ENCODE measurements at regions of chr4 and their contacts with region 1.

Region 1: GRCh38 chr4:147731580-147732517 is at the start of gene ARHGAP10:
- DNase-seq: peak; percentile 85
- H3K4me3 Mint-ChIP-seq: peak within 1 kb of the TSS; percentile 86
- H3K27ac Mint-ChIP-seq: peak within 1 kb of the TSS; percentile 50
- H3K4me1 Mint-ChIP-seq: peaks cover 40% of the 10 kb centered on the region
- H3K27me3 Mint-ChIP-seq: no peaks in the 10 kb centered on the region
- CTCF ChIP-seq: no peak
- total RNA-seq, gene ARHGAP10: 22.4 and 24.6 TPM in 2 replicates

Region 2: GRCh38 chr4:147440442-147440841 is 291.4 kb before region 1 on chr4:
- CTCF ChIA-PET with region 1: no interaction called
- POLR2A ChIA-PET with region 1: no interaction called
- intact Hi-C with region 1: no loop called
- DNase-seq: no peak
- H3K4me3 Mint-ChIP-seq: no peak overlapping the region
- H3K27ac Mint-ChIP-seq: no peak overlapping the region
- H3K4me1 Mint-ChIP-seq: no peaks in the 10 kb centered on the region
- H3K27me3 Mint-ChIP-seq: no peaks in the 10 kb centered on the region
- CTCF ChIP-seq: no peak

Region 3: DNA sequence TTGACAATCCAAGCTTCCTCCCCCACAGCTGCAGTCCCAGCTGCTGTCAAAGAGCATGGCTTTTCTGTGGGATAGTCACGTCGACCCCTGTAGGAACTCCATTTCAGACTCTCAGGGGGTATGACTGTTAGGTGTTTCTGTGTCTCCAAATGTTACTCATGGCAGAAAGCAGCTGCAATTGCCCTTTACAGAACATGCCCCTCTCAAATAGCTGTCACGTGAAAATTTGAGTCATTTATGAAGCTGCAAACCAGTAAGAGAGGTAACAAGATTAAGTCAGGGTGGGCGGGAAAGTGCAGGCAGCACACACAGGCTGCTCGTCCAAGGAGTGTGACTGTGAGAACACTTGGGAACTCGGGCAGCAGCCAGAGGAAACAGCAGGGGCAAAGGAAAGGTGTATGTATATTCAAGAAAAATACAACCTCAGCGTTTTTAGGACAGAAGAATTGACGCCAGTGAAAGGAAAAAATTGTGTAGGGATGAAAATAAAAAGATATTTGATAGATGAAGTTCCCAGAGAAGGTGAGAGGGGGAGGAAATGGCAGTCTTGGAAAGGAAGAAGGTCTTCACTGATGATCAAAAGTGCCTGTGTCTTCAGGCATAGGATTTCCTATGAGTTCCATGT is 181.1 kb before region 1 on chr4:
- CTCF ChIA-PET with region 1: no interaction called
- POLR2A ChIA-PET with region 1: no interaction called
- intact Hi-C with region 1: no loop called
- DNase-seq: peak; percentile 54
- H3K4me3 Mint-ChIP-seq: peak overlapping the region; percentile 3
- H3K27ac Mint-ChIP-seq: peak overlapping the region; percentile 4
- H3K4me1 Mint-ChIP-seq: peaks cover 37% of the 10 kb centered on the region
- H3K27me3 Mint-ChIP-seq: no peaks in the 10 kb centered on the region
- CTCF ChIP-seq: no peak

Region 4: DNA sequence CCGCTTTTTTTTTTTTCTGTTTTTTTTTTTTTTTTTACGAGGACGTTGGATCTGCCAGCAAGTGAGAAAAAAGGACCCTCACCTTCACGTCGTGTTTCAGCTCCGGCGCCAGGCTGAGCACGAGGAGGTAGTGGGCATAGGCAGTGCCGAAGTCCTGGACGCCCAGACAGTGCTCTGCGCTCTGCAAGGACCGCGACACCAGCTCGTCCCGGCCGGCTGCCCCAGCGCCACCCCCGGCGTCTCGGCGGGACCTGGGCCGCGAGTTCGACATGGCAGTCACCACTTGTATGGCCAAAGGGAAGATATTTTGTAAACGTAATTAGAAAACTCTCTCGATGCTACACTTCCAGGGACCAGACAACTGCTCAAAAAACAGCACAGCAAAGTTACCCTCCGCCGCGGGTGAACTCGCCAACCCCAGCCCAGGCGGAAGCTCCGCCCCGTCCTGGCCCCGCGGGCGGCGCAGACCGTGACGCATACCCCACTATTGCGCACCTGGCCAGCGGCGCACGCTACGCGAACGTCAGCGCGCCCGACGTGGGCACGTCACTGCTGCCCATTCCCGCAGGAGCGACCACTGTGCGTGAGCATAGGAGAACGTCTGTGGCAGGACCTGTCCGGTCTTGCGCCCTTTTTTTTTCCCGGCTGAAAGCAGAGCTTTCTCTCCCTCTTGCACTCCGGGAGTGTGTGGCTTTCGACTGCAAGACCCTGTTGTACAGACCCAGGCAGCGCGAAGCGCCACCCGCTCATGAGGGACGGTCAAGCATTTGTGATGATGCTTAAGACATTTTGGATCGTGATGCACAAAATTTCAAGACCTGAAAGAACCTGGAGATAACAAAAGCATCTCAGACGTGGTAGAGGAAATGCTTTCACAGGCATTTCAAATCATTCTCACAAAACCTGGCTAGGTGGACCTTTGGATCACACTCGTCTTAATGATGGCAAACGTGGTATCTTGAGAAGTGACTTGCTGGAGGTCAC is 47.8 kb before region 1 on chr4 and contains the start of gene PRMT9:
- CTCF ChIA-PET with region 1: no interaction called
- POLR2A ChIA-PET with region 1: interaction called, 33 read pairs
- intact Hi-C with region 1: no loop called
- DNase-seq: peak; percentile 87
- H3K4me3 Mint-ChIP-seq: peak within 1 kb of the TSS; percentile 88
- H3K27ac Mint-ChIP-seq: peak within 1 kb of the TSS; percentile 89
- H3K4me1 Mint-ChIP-seq: peaks cover 11% of the 10 kb centered on the region
- H3K27me3 Mint-ChIP-seq: no peaks in the 10 kb centered on the region
- CTCF ChIP-seq: no peak
- total RNA-seq, gene PRMT9: 6.1 and 8.4 TPM in 2 replicates

Region 5: GRCh38 chr4:147714575-147715401 is 17.1 kb before region 1 on chr4:
- CTCF ChIA-PET with region 1: interaction called, 6 read pairs
- POLR2A ChIA-PET with region 1: interaction called, 21 read pairs
- intact Hi-C with region 1: loop called (anchors 2 kb)
- DNase-seq: peak; percentile 68
- H3K4me3 Mint-ChIP-seq: no peak overlapping the region
- H3K27ac Mint-ChIP-seq: no peak overlapping the region
- H3K4me1 Mint-ChIP-seq: no peaks in the 10 kb centered on the region
- H3K27me3 Mint-ChIP-seq: no peaks in the 10 kb centered on the region
- CTCF ChIP-seq: no peak

Region 6: GRCh38 chr4:147768113-147768512 is 36.3 kb after region 1 on chr4:
- CTCF ChIA-PET with region 1: interaction called, 5 read pairs
- POLR2A ChIA-PET with region 1: interaction called, 4 read pairs
- intact Hi-C with region 1: loop called (anchors 5 kb)
- DNase-seq: peak; percentile 57
- H3K4me3 Mint-ChIP-seq: no peak overlapping the region
- H3K27ac Mint-ChIP-seq: no peak overlapping the region
- H3K4me1 Mint-ChIP-seq: peaks cover 34% of the 10 kb centered on the region
- H3K27me3 Mint-ChIP-seq: no peaks in the 10 kb centered on the region
- CTCF ChIP-seq: no peak

Region 7: DNA sequence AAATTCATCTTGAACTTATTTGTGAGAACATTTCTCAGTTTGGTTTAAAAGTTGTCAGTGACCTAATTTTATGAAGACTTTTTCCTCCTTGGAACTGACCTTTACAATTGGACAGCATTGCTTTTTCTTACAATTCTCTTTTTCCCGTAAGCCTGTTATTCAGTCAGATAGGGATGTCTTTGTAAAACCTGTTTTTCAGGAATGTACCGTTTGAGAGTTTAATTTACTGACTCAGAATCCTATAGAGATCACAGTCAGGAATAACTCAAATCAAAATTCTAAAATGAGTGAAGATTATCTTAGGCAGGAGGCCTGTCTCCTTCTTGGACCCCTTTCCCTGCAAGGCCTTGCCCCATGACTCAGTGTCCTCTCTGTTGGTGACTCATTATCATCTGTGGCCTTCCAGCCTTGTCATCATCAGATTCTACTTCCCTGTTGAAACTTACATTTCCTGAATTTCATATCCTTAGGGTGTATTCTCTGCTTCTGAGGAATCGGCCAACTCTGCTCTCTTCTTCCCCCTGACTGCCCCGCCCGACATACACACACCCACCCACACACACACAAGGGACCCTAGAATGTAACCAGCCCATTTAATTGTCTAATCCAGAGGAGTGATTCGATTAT is 99.8 kb after region 1 on chr4:
- CTCF ChIA-PET with region 1: interaction called, 7 read pairs
- POLR2A ChIA-PET with region 1: interaction called, 71 read pairs
- intact Hi-C with region 1: loop called (anchors 2 kb)
- DNase-seq: peak; percentile 91
- H3K4me3 Mint-ChIP-seq: peak overlapping the region; percentile 36
- H3K27ac Mint-ChIP-seq: peak overlapping the region; percentile 92
- H3K4me1 Mint-ChIP-seq: peaks cover 38% of the 10 kb centered on the region
- H3K27me3 Mint-ChIP-seq: no peaks in the 10 kb centered on the region
- CTCF ChIP-seq: no peak

Region 8: GRCh38 chr4:148108766-148109165 is 376.9 kb after region 1 on chr4:
- CTCF ChIA-PET with region 1: no interaction called
- POLR2A ChIA-PET with region 1: no interaction called
- intact Hi-C with region 1: no loop called
- DNase-seq: no peak
- H3K4me3 Mint-ChIP-seq: no peak overlapping the region
- H3K27ac Mint-ChIP-seq: no peak overlapping the region
- H3K4me1 Mint-ChIP-seq: peaks cover 9% of the 10 kb centered on the region
- H3K27me3 Mint-ChIP-seq: no peaks in the 10 kb centered on the region
- CTCF ChIP-seq: no peak